ENCODE measurements at regions of chr12 and their contacts with region 1.

Region 1: GRCh38 chr12:72359416-72359815 is 87.2 kb downstream of the TRHDE start:
- DNase-seq: no peak
- H3K4me3 ChIP-seq: no peak overlapping the region
- H3K27ac ChIP-seq: no peak overlapping the region
- H3K4me1 ChIP-seq: no peaks in the 10 kb centered on the region
- H3K27me3 ChIP-seq: no peaks in the 10 kb centered on the region
- CTCF ChIP-seq: no peak
- EP300 ChIP-seq: no peak
- POLR2A ChIP-seq: no peak
- RAD21 ChIP-seq: no peak

Region 2: DNA sequence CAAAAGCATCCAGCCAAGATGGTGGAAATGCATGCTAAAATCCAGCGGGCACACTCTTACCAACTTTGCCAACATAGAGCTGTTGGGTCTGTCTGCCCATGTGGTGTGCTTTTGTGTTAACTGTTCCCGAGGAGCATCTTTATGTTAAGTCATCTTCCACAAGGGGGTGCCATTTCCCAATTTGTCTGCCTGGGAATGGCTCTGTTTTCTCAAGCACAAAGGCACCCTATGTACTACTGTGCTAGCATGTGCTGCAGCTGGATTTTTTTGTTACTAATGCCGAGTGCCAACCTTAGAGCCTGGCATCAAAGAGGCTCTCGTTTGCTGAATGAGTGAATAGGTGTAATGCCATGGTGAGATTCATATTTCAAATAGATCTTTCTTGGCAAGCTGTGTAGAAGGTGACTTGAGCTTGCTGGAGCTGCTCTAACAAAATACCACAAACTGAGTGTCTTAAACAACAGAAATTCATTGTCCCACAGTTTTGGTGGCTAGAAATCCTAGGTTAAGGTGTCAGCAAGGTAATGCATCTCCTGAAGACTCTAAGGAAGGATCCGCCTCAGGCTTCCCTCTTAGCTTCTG is 13.0 kb before region 1 on chr12:
- CTCF ChIA-PET with region 1: interaction called, 10 read pairs
- POLR2A ChIA-PET with region 1: no interaction called
- DNase-seq: peak; percentile 59 to 83
- H3K4me3 ChIP-seq: no peak overlapping the region
- H3K27ac ChIP-seq: no peak overlapping the region
- H3K4me1 ChIP-seq: peaks cover 0 to 7% (median 2%) of the 10 kb centered on the region in 4 experiments; a peak in 2 of 7 replicates
- H3K27me3 ChIP-seq: no peaks in the 10 kb centered on the region
- CTCF ChIP-seq: peak in 2 of 3 experiments; percentile 60 to 77; a peak in 3 of 4 replicates
- EP300 ChIP-seq: no peak
- POLR2A ChIP-seq: no peak
- RAD21 ChIP-seq: peak; percentile 88 to 90

Region 3: DNA sequence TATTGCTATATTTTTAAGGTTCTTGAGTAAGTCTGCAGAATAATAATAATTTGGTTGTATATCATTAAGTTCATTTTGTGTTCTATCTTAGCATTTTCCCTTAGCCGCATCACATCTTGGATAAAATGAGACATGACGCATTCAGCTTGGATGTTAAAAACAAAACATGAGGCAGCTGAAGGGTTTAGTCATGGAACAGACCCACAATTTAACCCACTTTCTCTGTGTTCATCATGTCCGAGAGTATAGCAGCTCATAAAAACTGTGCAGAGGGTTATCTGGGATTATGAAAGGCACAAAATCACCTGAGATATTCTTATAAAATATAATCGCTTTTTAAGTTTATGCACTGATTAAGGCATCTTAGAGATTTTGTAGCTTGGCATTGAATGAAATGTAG is 132.0 kb after region 1 on chr12:
- CTCF ChIA-PET with region 1: no interaction called
- POLR2A ChIA-PET with region 1: no interaction called
- DNase-seq: no peak
- H3K4me3 ChIP-seq: no peak overlapping the region
- H3K27ac ChIP-seq: no peak overlapping the region
- H3K4me1 ChIP-seq: no peaks in the 10 kb centered on the region
- H3K27me3 ChIP-seq: no peaks in the 10 kb centered on the region
- CTCF ChIP-seq: no peak
- EP300 ChIP-seq: no peak
- POLR2A ChIP-seq: no peak
- RAD21 ChIP-seq: no peak

Measured in H1 (cell line).